Activated CD4-positive, alpha-beta T cell treated with anti-CD3 and anti-CD28 coated beads for 36 hours (primary cell): ENCODE measurements at regions of chr10 and their contacts with region 1.

Region 1: GRCh38 chr10:92592761-92593618 is at the start of gene KIF11:
- DNase-seq: peak; percentile 99
- ATAC-seq: peak; percentile 84
- H3K4me3 Mint-ChIP-seq: peak within 1 kb of the TSS; percentile 94
- H3K27ac Mint-ChIP-seq: peak within 1 kb of the TSS; percentile 97
- H3K4me1 Mint-ChIP-seq: peaks cover 37% of the 10 kb centered on the region
- H3K27me3 Mint-ChIP-seq: no peaks in the 10 kb centered on the region
- total RNA-seq, gene KIF11: 59.1 to 59.3 TPM

Region 2: GRCh38 chr10:91923371-91924211 is 669.4 kb before region 1 on chr10 and contains the start of gene BTAF1:
- CTCF ChIA-PET with region 1: no interaction called
- POLR2A ChIA-PET with region 1: no interaction called
- intact Hi-C with region 1: loop called in 1 of 2 experiments (anchors 1 kb)
- DNase-seq: peak; percentile 96
- ATAC-seq: peak; percentile 96
- H3K4me3 Mint-ChIP-seq: peak within 1 kb of the TSS; percentile 97
- H3K27ac Mint-ChIP-seq: peak within 1 kb of the TSS; percentile 99
- H3K4me1 Mint-ChIP-seq: peaks cover 37% of the 10 kb centered on the region
- H3K27me3 Mint-ChIP-seq: peaks cover 2% of the 10 kb centered on the region
- total RNA-seq, gene BTAF1: 59.0 to 59.4 TPM

Region 3: DNA sequence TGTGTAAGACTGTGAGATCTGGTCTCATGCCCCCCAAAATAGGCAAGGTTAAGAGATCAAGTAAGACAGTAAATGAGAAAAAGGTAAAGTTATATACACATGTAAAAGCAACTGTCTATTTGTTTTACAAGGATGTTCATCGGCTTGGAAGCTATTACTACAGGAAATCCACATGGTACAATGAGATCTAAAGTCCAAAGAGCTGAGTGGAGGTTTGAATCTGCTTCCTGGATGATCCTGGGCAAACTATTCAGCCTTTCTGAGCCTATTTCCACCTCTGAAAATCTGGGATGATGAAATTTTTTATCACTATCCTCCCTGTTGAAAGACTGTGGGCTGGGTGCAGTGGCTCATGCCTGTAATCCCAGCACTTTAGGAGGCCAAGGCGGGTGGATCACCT is 142.1 kb before region 1 on chr10:
- CTCF ChIA-PET with region 1: no interaction called
- POLR2A ChIA-PET with region 1: no interaction called
- intact Hi-C with region 1: no loop called
- DNase-seq: no peak
- ATAC-seq: no peak
- H3K4me3 Mint-ChIP-seq: no peak overlapping the region
- H3K27ac Mint-ChIP-seq: no peak overlapping the region
- H3K4me1 Mint-ChIP-seq: no peaks in the 10 kb centered on the region
- H3K27me3 Mint-ChIP-seq: no peaks in the 10 kb centered on the region

Region 4: GRCh38 chr10:92517034-92517655 is 75.8 kb before region 1 on chr10:
- CTCF ChIA-PET with region 1: interaction called, 3 read pairs
- POLR2A ChIA-PET with region 1: no interaction called
- intact Hi-C with region 1: loop called in 1 of 2 experiments (anchors 5 kb)
- DNase-seq: peak; percentile 77
- ATAC-seq: peak; percentile 92
- H3K4me3 Mint-ChIP-seq: no peak overlapping the region
- H3K27ac Mint-ChIP-seq: no peak overlapping the region
- H3K4me1 Mint-ChIP-seq: peaks cover 6% of the 10 kb centered on the region
- H3K27me3 Mint-ChIP-seq: no peaks in the 10 kb centered on the region

Region 5: GRCh38 chr10:92619368-92619767 is 26.4 kb after region 1 on chr10:
- CTCF ChIA-PET with region 1: no interaction called
- POLR2A ChIA-PET with region 1: no interaction called
- intact Hi-C with region 1: no loop called
- DNase-seq: no peak
- ATAC-seq: no peak
- H3K4me3 Mint-ChIP-seq: no peak overlapping the region
- H3K27ac Mint-ChIP-seq: no peak overlapping the region
- H3K4me1 Mint-ChIP-seq: no peaks in the 10 kb centered on the region
- H3K27me3 Mint-ChIP-seq: no peaks in the 10 kb centered on the region

Region 6: GRCh38 chr10:92689663-92690210 is 96.7 kb after region 1 on chr10 and contains the start of gene HHEX:
- CTCF ChIA-PET with region 1: no interaction called
- POLR2A ChIA-PET with region 1: no interaction called
- intact Hi-C with region 1: loop called in 1 of 2 experiments (anchors 5 kb)
- DNase-seq: peak; percentile 52
- ATAC-seq: peak; percentile 54
- H3K4me3 Mint-ChIP-seq: peak within 1 kb of the TSS; percentile 51
- H3K27ac Mint-ChIP-seq: no peak within 1 kb of the TSS
- H3K4me1 Mint-ChIP-seq: peaks cover 20% of the 10 kb centered on the region
- H3K27me3 Mint-ChIP-seq: peaks cover 58% of the 10 kb centered on the region
- total RNA-seq, gene HHEX: 0.11 TPM in 1 of 2 experiments, not detected in the other

Region 7: GRCh38 chr10:93496322-93497041 is 903.5 kb after region 1 on chr10 and contains the start of gene CEP55:
- CTCF ChIA-PET with region 1: no interaction called
- POLR2A ChIA-PET with region 1: no interaction called
- intact Hi-C with region 1: loop called (anchors 5 to 10 kb)
- DNase-seq: peak; percentile 98
- ATAC-seq: peak; percentile 99
- H3K4me3 Mint-ChIP-seq: peak within 1 kb of the TSS; percentile 78
- H3K27ac Mint-ChIP-seq: peak within 1 kb of the TSS; percentile 84
- H3K4me1 Mint-ChIP-seq: peaks cover 25% of the 10 kb centered on the region
- H3K27me3 Mint-ChIP-seq: peaks cover 2% of the 10 kb centered on the region
- total RNA-seq, gene CEP55: 67.8 to 76.0 TPM

Region 8: DNA sequence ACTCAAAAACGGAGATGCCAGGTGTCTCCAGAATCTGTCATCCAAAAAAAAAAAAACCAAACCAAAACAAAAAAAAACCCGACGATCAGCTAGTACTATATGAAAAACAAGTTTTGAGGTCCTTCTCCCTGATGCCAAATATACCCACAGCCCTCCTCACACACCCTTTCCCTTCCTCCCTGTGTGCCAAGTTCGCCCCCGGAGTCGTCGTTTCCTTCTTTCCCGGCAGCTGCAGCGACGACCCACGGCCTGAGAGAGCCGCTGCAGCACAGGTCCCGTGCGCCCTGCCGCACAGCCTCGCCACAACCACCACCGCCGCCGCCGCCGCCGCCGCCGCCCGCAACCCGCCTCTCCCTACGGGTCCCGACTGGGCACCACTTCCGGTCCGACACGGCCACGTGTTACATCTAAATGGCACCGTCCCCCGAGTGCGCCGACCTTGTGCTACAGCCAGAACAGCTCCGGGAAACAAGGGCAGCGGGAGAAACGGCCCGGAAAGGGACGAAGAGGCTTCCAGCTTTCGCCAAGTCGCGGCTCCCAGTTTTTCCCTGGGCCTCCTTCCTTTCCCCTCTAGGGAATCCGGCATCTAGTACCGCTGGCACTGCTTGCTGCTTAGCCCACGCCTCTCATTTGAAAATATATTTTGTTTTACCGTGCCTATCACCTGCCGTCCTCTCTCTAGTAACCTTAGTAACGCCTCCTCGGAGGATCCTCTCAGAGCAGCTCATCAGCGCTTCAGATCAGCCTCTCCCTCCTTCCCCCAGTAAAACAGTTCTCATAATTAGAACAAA is 1109.4 kb after region 1 on chr10 and contains the start of gene FRA10AC1:
- CTCF ChIA-PET with region 1: no interaction called
- POLR2A ChIA-PET with region 1: no interaction called
- intact Hi-C with region 1: loop called in 1 of 2 experiments (anchors 2 kb)
- DNase-seq: peak; percentile 93
- ATAC-seq: peak; percentile 84
- H3K4me3 Mint-ChIP-seq: no peak within 1 kb of the TSS
- H3K27ac Mint-ChIP-seq: no peak within 1 kb of the TSS
- H3K4me1 Mint-ChIP-seq: peaks cover 29% of the 10 kb centered on the region
- H3K27me3 Mint-ChIP-seq: no peaks in the 10 kb centered on the region
- total RNA-seq, gene FRA10AC1: 18.9 to 29.4 TPM